CD4-positive, alpha-beta T cell (primary cell): ENCODE measurements at regions of chr14 and their contacts with region 1.

Region 1: GRCh38 chr14:98444077-98444476 is 827.9 kb downstream of the BCL11B start:
- DNase-seq: peak; percentile 27 to 82 (median 48)
- ATAC-seq: peak; percentile 97
- H3K4me3 ChIP-seq: no peak overlapping the region
- H3K4me3 Mint-ChIP-seq: peak overlapping the region; percentile 79
- H3K27ac ChIP-seq: peak overlapping the region; percentile 75 to 81
- H3K27ac Mint-ChIP-seq: no peak overlapping the region
- H3K4me1 ChIP-seq: peaks cover 28% of the 10 kb centered on the region
- H3K4me1 Mint-ChIP-seq: peaks cover 57% of the 10 kb centered on the region
- H3K27me3 ChIP-seq: no peaks in the 10 kb centered on the region
- H3K27me3 Mint-ChIP-seq: no peaks in the 10 kb centered on the region
- CTCF ChIP-seq: no peak

Region 2: DNA sequence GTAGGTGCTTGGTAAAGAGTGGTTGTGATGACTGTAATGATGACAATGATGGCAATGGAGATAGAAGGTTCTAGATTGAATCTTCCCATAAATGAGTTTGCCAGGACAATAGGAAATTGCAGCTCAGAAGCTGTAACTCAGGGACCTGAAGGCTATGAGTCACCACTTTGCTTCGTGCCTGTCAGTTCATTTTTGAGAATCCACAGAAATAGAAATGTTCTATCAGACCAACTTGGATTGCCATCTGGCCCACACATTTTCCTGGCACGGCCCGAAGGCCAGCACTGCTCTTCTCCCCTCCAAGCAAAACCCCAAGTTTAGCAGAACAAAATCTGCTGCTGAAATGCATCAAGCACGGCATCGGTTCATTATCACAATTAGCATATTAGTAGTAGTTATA is 299.1 kb before region 1 on chr14:
- CTCF ChIA-PET with region 1: no interaction called
- POLR2A ChIA-PET with region 1: interaction called, 5 read pairs
- intact Hi-C with region 1: loop called in 1 of 2 experiments (anchors 10 kb)
- DNase-seq: no peak
- ATAC-seq: no peak
- H3K4me3 ChIP-seq: no peak overlapping the region
- H3K4me3 Mint-ChIP-seq: no peak overlapping the region
- H3K27ac ChIP-seq: no peak overlapping the region
- H3K27ac Mint-ChIP-seq: peak overlapping the region; percentile 43
- H3K4me1 ChIP-seq: peaks cover 25% of the 10 kb centered on the region
- H3K4me1 Mint-ChIP-seq: peaks cover 64% of the 10 kb centered on the region
- H3K27me3 ChIP-seq: no peaks in the 10 kb centered on the region
- H3K27me3 Mint-ChIP-seq: no peaks in the 10 kb centered on the region
- CTCF ChIP-seq: no peak

Region 3: DNA sequence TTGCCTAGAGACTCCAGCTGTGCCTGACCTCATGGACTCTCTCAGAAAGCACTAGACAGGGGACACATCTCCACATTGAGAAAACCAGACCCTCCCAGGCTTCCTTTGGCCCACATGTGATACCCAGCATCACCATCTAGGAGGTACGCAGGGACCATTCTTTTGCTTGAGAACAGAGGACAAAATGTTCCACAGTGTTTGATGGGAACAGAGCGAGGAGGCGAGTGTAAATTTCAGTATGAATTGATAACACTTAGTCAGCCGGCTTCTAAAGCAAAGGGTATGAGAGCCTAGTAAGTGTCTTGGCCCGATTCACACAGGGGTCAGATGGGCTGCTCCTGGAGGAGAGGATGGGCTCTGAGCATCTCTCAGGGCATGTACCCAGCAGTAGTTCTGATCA is 224.4 kb before region 1 on chr14:
- CTCF ChIA-PET with region 1: no interaction called
- POLR2A ChIA-PET with region 1: no interaction called
- intact Hi-C with region 1: loop called (anchors 5 to 10 kb)
- DNase-seq: no peak
- ATAC-seq: no peak
- H3K4me3 ChIP-seq: no peak overlapping the region
- H3K4me3 Mint-ChIP-seq: no peak overlapping the region
- H3K27ac ChIP-seq: no peak overlapping the region
- H3K27ac Mint-ChIP-seq: no peak overlapping the region
- H3K4me1 ChIP-seq: peaks cover 44% of the 10 kb centered on the region
- H3K4me1 Mint-ChIP-seq: peaks cover 27% of the 10 kb centered on the region
- H3K27me3 ChIP-seq: no peaks in the 10 kb centered on the region
- H3K27me3 Mint-ChIP-seq: no peaks in the 10 kb centered on the region
- CTCF ChIP-seq: no peak

Region 4: GRCh38 chr14:98462908-98463307 is 18.8 kb after region 1 on chr14:
- CTCF ChIA-PET with region 1: no interaction called
- POLR2A ChIA-PET with region 1: no interaction called
- intact Hi-C with region 1: no loop called
- DNase-seq: no peak
- ATAC-seq: no peak
- H3K4me3 ChIP-seq: no peak overlapping the region
- H3K4me3 Mint-ChIP-seq: no peak overlapping the region
- H3K27ac ChIP-seq: no peak overlapping the region
- H3K27ac Mint-ChIP-seq: no peak overlapping the region
- H3K4me1 ChIP-seq: no peaks in the 10 kb centered on the region
- H3K4me1 Mint-ChIP-seq: peaks cover under 1% of the 10 kb centered on the region
- H3K27me3 ChIP-seq: no peaks in the 10 kb centered on the region
- H3K27me3 Mint-ChIP-seq: no peaks in the 10 kb centered on the region
- CTCF ChIP-seq: no peak

Region 5: GRCh38 chr14:99009871-99010270 is 565.8 kb after region 1 on chr14:
- CTCF ChIA-PET with region 1: no interaction called
- POLR2A ChIA-PET with region 1: no interaction called
- intact Hi-C with region 1: no loop called
- DNase-seq: peak in 10 of 14 experiments; percentile 2 to 43 (median 15)
- ATAC-seq: peak; percentile 90
- H3K4me3 ChIP-seq: no peak overlapping the region
- H3K4me3 Mint-ChIP-seq: peak overlapping the region; percentile 54
- H3K27ac ChIP-seq: peak overlapping the region in 1 of 2 donors; percentile 17
- H3K27ac Mint-ChIP-seq: peak overlapping the region; percentile 66
- H3K4me1 ChIP-seq: peaks cover 8% of the 10 kb centered on the region
- H3K4me1 Mint-ChIP-seq: peaks cover 9% of the 10 kb centered on the region
- H3K27me3 ChIP-seq: no peaks in the 10 kb centered on the region
- H3K27me3 Mint-ChIP-seq: no peaks in the 10 kb centered on the region
- CTCF ChIP-seq: no peak